B cell (primary cell): ENCODE measurements at regions of chr4 and their contacts with region 1.

Region 1: DNA sequence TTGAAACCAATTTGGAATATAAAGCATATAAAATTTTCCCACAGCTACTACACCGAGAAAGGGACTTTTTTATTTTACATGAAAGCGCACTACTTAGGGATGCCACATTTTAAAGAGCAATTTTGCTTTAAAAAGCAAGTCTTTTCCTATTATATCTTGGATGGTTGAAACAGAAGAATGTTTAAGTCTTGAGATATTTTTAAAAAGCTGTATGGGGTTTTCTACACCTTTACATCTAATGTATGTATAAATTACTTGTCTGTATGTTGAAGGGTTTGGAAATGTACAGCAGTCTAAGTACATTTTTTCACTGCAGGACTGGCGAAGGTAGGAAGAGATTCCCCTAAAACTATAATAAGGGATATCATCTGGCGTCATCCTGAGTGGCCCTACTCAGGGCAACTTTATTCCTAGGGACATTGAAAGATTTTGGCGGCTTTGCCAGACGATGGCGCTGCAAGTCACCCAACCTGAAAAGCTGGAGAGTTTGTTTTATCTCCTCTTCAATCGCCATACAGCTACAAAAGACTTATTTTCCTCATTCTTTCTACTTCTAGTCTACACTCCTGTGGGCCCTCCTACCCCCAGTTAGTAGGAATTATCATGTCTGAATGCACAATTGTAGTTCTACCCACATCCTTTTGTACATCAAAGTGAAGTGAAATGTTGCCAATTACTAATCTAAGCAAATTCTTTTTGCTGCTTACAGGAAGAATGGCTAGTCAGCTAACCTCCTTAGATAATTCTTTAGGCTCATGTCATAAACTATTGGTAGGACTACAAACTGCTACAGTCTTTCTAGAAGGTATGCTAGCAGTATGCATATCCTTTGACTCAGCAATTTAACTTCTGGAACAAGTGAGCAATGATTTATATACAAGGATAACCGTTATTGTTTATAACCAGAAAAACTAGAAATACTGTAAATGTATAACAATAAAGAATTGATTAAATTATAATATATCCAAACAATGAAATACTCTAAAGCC is 782 bp upstream of the NEK1 start:
- DNase-seq: peak; percentile 82
- ATAC-seq: peak; percentile 26
- H3K4me3 ChIP-seq: peak overlapping the region; percentile 85 to 95 (median 90)
- H3K4me3 Mint-ChIP-seq: peak overlapping the region; percentile 98
- H3K27ac ChIP-seq: peak overlapping the region; percentile 98 to 99
- H3K27ac Mint-ChIP-seq: peak overlapping the region; percentile 99
- H3K4me1 ChIP-seq: peaks cover 6 to 12% of the 10 kb centered on the region in 2 donors
- H3K4me1 Mint-ChIP-seq: peaks cover 22% of the 10 kb centered on the region
- H3K27me3 ChIP-seq: no peaks in the 10 kb centered on the region
- H3K27me3 Mint-ChIP-seq: no peaks in the 10 kb centered on the region
- CTCF ChIP-seq: peak; percentile 87

Region 2: GRCh38 chr4:168923526-168924194 is 689.5 kb before region 1 on chr4:
- CTCF ChIA-PET with region 1: interaction called, 11 read pairs
- POLR2A ChIA-PET with region 1: no interaction called
- intact Hi-C with region 1: no loop called
- DNase-seq: peak; percentile 71
- ATAC-seq: peak; percentile 51
- H3K4me3 ChIP-seq: no peak overlapping the region
- H3K4me3 Mint-ChIP-seq: no peak overlapping the region
- H3K27ac ChIP-seq: no peak overlapping the region
- H3K27ac Mint-ChIP-seq: no peak overlapping the region
- H3K4me1 ChIP-seq: no peaks in the 10 kb centered on the region
- H3K4me1 Mint-ChIP-seq: no peaks in the 10 kb centered on the region
- H3K27me3 ChIP-seq: no peaks in the 10 kb centered on the region
- H3K27me3 Mint-ChIP-seq: no peaks in the 10 kb centered on the region
- CTCF ChIP-seq: peak; percentile 90

Region 3: GRCh38 chr4:169757575-169758184 is 144.5 kb after region 1 on chr4 and contains the start of gene HPF1:
- CTCF ChIA-PET with region 1: interaction called, 4 read pairs
- POLR2A ChIA-PET with region 1: no interaction called
- intact Hi-C with region 1: loop called (anchors 2 kb)
- DNase-seq: peak; percentile 94
- ATAC-seq: peak; percentile 99
- H3K4me3 ChIP-seq: peak within 1 kb of the TSS; percentile 50 to 91 (median 86)
- H3K4me3 Mint-ChIP-seq: peak within 1 kb of the TSS; percentile 96
- H3K27ac ChIP-seq: peak within 1 kb of the TSS; percentile 1 to 50
- H3K27ac Mint-ChIP-seq: peak within 1 kb of the TSS; percentile 79
- H3K4me1 ChIP-seq: peaks cover 14 to 20% of the 10 kb centered on the region in 2 donors
- H3K4me1 Mint-ChIP-seq: peaks cover 21% of the 10 kb centered on the region
- H3K27me3 ChIP-seq: no peaks in the 10 kb centered on the region
- H3K27me3 Mint-ChIP-seq: no peaks in the 10 kb centered on the region
- CTCF ChIP-seq: no peak
- total RNA-seq, gene HPF1: 9.9 and 15.2 TPM in 2 replicates

Region 4: DNA sequence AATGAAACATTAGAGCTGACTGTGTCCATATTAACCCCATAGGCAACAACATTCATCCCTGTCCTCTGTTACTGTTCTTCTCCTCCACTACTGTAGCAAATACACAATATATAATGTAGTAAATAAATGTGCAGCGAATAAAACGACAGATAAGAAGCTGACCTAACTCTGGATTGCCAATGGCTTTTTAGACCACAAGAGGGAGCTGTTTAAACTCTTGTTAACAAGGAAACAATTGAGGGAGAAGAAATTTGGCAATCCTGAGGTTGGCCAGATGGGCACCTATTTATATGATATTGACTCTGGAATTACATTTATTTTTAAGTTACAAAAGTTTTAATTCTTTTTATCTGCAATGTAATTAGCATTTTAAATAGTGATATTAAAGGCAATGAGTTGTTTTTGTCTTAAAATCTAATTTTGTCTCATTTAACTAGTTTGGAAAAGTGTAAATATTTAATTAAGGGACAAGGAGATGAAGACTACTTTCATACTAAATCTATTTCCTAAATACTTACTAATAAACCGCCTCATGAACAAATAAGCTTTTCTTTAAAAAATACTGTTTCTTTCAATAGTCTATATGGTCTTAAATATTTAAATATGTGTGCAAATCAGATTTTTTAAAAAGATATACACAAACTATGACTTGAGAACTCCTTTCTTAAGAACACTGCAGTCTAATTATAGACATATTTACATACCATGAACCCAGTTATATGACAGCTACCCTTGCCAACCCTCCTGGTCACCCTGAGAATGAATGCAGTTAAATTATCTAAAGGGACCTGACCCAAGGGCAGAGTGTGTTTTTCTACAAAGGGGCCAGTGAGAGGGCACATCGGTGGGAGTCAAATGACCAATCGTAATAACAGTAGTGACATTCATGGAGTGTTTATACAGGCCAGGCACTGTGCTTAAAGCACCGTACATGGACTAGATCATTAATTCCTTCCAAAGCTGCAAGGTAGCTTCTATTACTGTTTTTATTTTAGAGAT is 197.5 kb after region 1 on chr4:
- CTCF ChIA-PET with region 1: interaction called, 32 read pairs
- POLR2A ChIA-PET with region 1: no interaction called
- intact Hi-C with region 1: loop called (anchors 1 kb)
- DNase-seq: peak; percentile 67
- ATAC-seq: peak; percentile 36
- H3K4me3 ChIP-seq: no peak overlapping the region
- H3K4me3 Mint-ChIP-seq: no peak overlapping the region
- H3K27ac ChIP-seq: no peak overlapping the region
- H3K27ac Mint-ChIP-seq: no peak overlapping the region
- H3K4me1 ChIP-seq: no peaks in the 10 kb centered on the region
- H3K4me1 Mint-ChIP-seq: no peaks in the 10 kb centered on the region
- H3K27me3 ChIP-seq: no peaks in the 10 kb centered on the region
- H3K27me3 Mint-ChIP-seq: peaks cover 3% of the 10 kb centered on the region
- CTCF ChIP-seq: peak; percentile 89

Region 5: DNA sequence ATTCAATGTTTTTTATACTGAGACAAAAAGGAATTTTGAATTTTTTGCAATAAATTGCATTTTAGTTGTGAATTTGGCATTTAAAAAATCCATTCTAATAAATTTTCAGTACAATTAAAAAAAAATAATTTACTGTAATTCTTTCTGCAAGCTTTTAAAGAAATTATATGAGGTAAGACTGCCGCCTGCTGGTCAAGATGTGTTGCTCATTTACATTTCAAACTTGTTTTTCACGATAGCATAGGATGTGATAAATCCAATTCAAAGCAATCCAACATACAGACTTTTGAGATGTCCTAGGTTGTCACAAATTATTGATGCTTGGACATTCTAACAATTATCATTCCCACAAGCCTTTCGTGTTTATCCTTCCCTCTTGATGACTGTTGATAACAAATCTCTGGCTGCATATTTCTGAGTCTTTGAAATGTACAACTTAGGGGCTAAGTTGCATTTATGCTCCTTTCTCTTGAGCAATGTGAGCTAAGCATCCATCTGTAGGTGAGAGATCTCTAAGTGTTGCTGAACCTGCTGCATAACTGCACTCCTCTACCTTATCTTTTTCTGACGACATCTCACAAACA is 434.7 kb after region 1 on chr4:
- CTCF ChIA-PET with region 1: interaction called, 18 read pairs
- POLR2A ChIA-PET with region 1: no interaction called
- intact Hi-C with region 1: loop called (anchors 1 kb)
- DNase-seq: peak; percentile 69
- ATAC-seq: no peak
- H3K4me3 ChIP-seq: no peak overlapping the region
- H3K4me3 Mint-ChIP-seq: no peak overlapping the region
- H3K27ac ChIP-seq: no peak overlapping the region
- H3K27ac Mint-ChIP-seq: no peak overlapping the region
- H3K4me1 ChIP-seq: no peaks in the 10 kb centered on the region
- H3K4me1 Mint-ChIP-seq: no peaks in the 10 kb centered on the region
- H3K27me3 ChIP-seq: peaks cover 0 to 3% (median 1%) of the 10 kb centered on the region in 4 experiments
- H3K27me3 Mint-ChIP-seq: peaks cover 3% of the 10 kb centered on the region
- CTCF ChIP-seq: peak; percentile 88